ENCODE measurements at regions of chr17 and their contacts with region 1.

Region 1: GRCh38 chr17:45218895-45219661 is 2.6 kb upstream of the FMNL1 start:
- DNase-seq: peak; percentile 91
- H3K4me3 Mint-ChIP-seq: peak overlapping the region; percentile 81
- H3K27ac Mint-ChIP-seq: peak overlapping the region; percentile 73
- H3K4me1 Mint-ChIP-seq: peaks cover 30% of the 10 kb centered on the region
- H3K27me3 Mint-ChIP-seq: no peaks in the 10 kb centered on the region

Region 2: GRCh38 chr17:45148183-45149036 is 70.7 kb before region 1 on chr17 and contains the start of gene HEXIM1:
- CTCF ChIA-PET with region 1: interaction called, 13 read pairs
- POLR2A ChIA-PET with region 1: interaction called, 41 read pairs
- intact Hi-C with region 1: no loop called
- DNase-seq: peak; percentile 99
- H3K4me3 Mint-ChIP-seq: peak within 1 kb of the TSS; percentile 99
- H3K27ac Mint-ChIP-seq: peak within 1 kb of the TSS; percentile 100
- H3K4me1 Mint-ChIP-seq: peaks cover 42% of the 10 kb centered on the region
- H3K27me3 Mint-ChIP-seq: no peaks in the 10 kb centered on the region
- total RNA-seq, gene HEXIM1: 24.9 to 25.4 TPM

Region 3: GRCh38 chr17:45235416-45236281 is 16.6 kb after region 1 on chr17:
- CTCF ChIA-PET with region 1: interaction called, 488 read pairs
- POLR2A ChIA-PET with region 1: interaction called, 75 read pairs
- intact Hi-C with region 1: loop called (anchors 1 kb)
- DNase-seq: peak; percentile 83
- H3K4me3 Mint-ChIP-seq: no peak overlapping the region
- H3K27ac Mint-ChIP-seq: peak overlapping the region; percentile 73
- H3K4me1 Mint-ChIP-seq: peaks cover 63% of the 10 kb centered on the region
- H3K27me3 Mint-ChIP-seq: no peaks in the 10 kb centered on the region

Region 4: DNA sequence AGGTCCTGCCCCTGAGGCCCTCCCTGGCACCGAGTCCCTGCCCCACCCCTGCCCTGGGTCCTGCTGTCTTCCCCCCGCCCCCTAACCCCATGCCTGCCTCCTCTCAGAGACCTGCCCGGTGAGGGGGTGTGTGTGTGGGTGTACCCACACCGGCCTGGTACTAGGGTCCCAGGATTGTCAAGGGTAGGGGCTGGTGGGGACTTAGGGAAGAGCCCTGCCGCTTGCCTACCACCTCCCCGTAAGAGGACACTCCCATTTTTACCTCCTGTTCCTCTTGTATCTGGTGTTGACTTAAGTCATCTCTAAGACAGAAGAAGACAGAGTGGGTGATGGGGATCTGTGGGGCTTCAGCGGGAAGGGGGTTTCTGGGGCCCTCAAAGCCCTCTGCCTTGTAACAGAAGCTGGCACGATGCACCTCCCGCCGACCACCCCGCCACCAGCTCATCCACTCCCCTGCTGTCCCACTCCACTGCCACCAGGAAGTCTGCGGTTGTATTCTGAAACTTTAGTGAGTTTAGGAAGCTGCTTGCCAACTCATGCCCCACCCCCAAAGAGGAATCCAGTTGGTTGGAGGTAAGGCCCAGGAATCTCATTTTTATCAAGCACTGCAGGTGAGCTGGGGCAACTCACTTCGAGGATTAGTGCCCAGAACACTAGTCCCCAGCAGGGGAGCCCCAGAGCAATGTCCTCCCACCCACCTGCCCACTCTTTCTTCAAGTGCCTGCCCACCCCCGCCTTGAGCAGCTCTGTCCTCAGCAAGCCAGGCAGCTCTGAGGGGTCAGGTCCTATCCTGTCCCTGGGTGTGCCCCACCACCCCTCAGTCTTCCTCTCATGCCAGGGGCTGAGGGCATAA is 37.3 kb after region 1 on chr17:
- CTCF ChIA-PET with region 1: interaction called, 77 read pairs
- POLR2A ChIA-PET with region 1: no interaction called
- intact Hi-C with region 1: no loop called
- DNase-seq: no peak
- H3K4me3 Mint-ChIP-seq: no peak overlapping the region
- H3K27ac Mint-ChIP-seq: no peak overlapping the region
- H3K4me1 Mint-ChIP-seq: peaks cover 32% of the 10 kb centered on the region
- H3K27me3 Mint-ChIP-seq: no peaks in the 10 kb centered on the region

Region 5: GRCh38 chr17:45270828-45271418 is 51.8 kb after region 1 on chr17:
- CTCF ChIA-PET with region 1: interaction called, 49 read pairs
- POLR2A ChIA-PET with region 1: no interaction called
- intact Hi-C with region 1: loop called (anchors 2 kb)
- DNase-seq: peak; percentile 64
- H3K4me3 Mint-ChIP-seq: no peak overlapping the region
- H3K27ac Mint-ChIP-seq: peak overlapping the region; percentile 8
- H3K4me1 Mint-ChIP-seq: peaks cover 16% of the 10 kb centered on the region
- H3K27me3 Mint-ChIP-seq: no peaks in the 10 kb centered on the region

Region 6: DNA sequence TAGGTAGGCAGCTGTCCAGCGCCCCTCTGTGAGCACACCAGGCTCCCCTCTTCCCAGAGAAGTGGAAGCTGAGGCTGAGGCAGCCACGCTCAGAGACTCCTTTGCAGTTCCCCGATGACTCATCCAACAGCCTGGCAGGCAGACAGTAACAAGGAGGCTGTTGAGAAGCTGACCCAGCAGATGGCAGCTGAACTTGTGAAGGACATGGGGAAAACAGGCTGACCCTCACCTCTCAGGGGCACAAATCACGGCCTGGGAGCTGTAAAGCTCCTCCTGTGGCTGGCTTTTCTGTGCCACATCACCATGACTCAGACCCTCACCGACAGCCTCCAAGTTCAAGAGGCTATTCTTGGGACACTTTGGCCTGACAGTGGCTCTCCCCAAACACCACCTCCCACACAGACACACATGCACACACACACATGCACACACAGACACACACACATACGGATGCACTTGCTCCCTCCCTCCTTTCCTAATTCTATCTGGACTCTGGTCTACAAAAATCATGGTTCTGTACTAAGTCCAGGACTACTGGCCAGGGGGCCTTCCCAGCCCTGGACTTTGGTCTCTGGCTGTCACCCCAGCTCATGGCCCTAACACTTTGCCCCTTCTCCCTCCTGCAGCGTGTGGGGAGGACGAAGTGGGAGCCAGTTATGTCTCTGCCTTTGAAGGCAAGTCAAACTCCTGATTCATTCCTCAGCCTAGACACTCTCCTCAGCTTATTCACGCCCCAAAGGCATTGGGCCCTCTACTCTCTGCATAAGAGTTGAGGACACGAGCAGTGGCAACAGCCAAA is 74.5 kb after region 1 on chr17:
- CTCF ChIA-PET with region 1: interaction called, 12 read pairs
- POLR2A ChIA-PET with region 1: interaction called, 3 read pairs
- intact Hi-C with region 1: no loop called
- DNase-seq: peak; percentile 57
- H3K4me3 Mint-ChIP-seq: no peak overlapping the region
- H3K27ac Mint-ChIP-seq: peak overlapping the region; percentile 79
- H3K4me1 Mint-ChIP-seq: peaks cover 72% of the 10 kb centered on the region
- H3K27me3 Mint-ChIP-seq: no peaks in the 10 kb centered on the region

Region 7: GRCh38 chr17:45317112-45317928 is 98.2 kb after region 1 on chr17:
- CTCF ChIA-PET with region 1: interaction called, 21 read pairs
- POLR2A ChIA-PET with region 1: interaction called, 52 read pairs
- intact Hi-C with region 1: no loop called
- DNase-seq: peak; percentile 100
- H3K4me3 Mint-ChIP-seq: peak overlapping the region; percentile 81
- H3K27ac Mint-ChIP-seq: peak overlapping the region; percentile 89
- H3K4me1 Mint-ChIP-seq: peaks cover 65% of the 10 kb centered on the region
- H3K27me3 Mint-ChIP-seq: no peaks in the 10 kb centered on the region